GM12878 (cell line): ENCODE measurements at regions of chr17 and their contacts with region 1.

Region 1: DNA sequence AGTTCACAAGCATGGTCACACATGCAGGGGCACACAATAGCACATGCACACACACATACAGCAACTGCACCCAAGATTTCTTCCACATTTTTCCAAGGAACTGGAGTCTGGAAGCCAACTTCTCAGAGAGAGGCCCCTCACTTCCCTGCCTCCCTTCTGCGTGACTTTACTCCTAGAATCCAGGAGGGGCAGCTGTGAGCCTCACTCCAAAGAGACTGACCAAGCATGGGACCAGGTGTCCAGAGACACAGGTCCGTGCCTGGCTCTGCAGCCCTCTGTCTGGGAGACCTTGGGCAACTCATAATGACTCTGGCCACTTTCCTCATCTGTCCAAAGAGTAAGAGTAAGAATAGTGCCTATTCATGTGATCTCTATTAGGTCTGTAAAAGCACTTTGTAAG is 104.7 kb upstream of the TMEM132E start:
- DNase-seq: no peak
- ATAC-seq: no peak
- H3K4me3 ChIP-seq: no peak overlapping the region
- H3K27ac ChIP-seq: no peak overlapping the region
- H3K4me1 ChIP-seq: no peaks in the 10 kb centered on the region
- H3K27me3 ChIP-seq: peaks cover 3 to 7% of the 10 kb centered on the region in 2 experiments; a peak in 2 of 4 replicates
- CTCF ChIP-seq: no peak
- EP300 ChIP-seq: no peak
- POLR2A ChIP-seq: no peak
- RAD21 ChIP-seq: no peak

Region 2: GRCh38 chr17:34413443-34414119 is 61.1 kb before region 1 on chr17:
- CTCF ChIA-PET with region 1: no interaction called
- POLR2A ChIA-PET with region 1: no interaction called
- RAD21 ChIA-PET with region 1: no interaction called
- SMC1A ChIA-PET with region 1: no interaction called
- in situ Hi-C with region 1: no loop called
- intact Hi-C with region 1: loop called (anchors 10 kb)
- DNase-seq: no peak
- ATAC-seq: no peak
- H3K4me3 ChIP-seq: no peak overlapping the region
- H3K27ac ChIP-seq: no peak overlapping the region
- H3K4me1 ChIP-seq: no peaks in the 10 kb centered on the region
- H3K27me3 ChIP-seq: peaks cover 0 to under 1% of the 10 kb centered on the region in 2 experiments; a peak in 3 of 4 replicates
- CTCF ChIP-seq: no peak
- EP300 ChIP-seq: no peak
- POLR2A ChIP-seq: no peak
- RAD21 ChIP-seq: no peak